ENCODE measurements at regions of chr5 and their contacts with region 1.

Region 1: DNA sequence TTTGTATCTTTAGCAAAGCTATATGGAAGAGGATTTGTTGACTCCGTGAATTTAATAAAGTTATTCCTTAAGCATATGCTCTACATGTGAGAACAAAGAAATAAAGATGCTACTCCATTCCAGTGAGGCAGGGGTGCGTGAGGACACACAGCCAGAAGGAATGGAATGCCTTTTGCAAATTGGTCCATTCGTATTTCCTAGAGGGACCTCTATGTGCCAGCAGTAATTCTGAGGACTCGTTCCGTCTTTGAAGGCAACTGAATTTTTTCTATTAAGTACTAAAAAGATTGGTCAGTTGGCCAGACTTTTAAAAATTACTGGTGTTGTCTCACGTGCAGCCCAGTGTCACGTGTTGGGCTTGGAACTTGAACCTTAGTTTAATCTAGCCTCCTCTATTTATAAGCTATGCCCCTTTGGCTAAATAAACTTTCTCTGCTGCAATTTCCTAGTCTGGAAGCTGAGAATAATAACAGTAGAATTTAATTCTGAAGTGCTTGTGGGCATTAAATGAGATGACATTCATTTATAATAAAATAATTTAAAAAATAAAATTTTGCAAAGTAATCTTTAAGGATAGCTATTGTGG is 13.9 kb downstream of the RAI14 start:
- DNase-seq: no peak
- H3K4me3 ChIP-seq: no peak overlapping the region
- CTCF ChIP-seq: no peak
- POLR2A ChIP-seq: no peak

Region 2: GRCh38 chr5:33479311-33479710 is 1190.7 kb before region 1 on chr5:
- intact Hi-C with region 1: loop called (anchors 5 kb)
- DNase-seq: no peak
- H3K4me3 ChIP-seq: no peak overlapping the region
- CTCF ChIP-seq: no peak
- POLR2A ChIP-seq: no peak

Region 3: GRCh38 chr5:34587355-34588241 is 82.4 kb before region 1 on chr5:
- intact Hi-C with region 1: no loop called
- DNase-seq: no peak
- H3K4me3 ChIP-seq: no peak overlapping the region
- CTCF ChIP-seq: peak in 1 of 3 donors; percentile 7
- POLR2A ChIP-seq: no peak

Region 4: GRCh38 chr5:34626036-34626754 is 43.8 kb before region 1 on chr5:
- intact Hi-C with region 1: no loop called
- DNase-seq: no peak
- H3K4me3 ChIP-seq: no peak overlapping the region
- CTCF ChIP-seq: no peak
- POLR2A ChIP-seq: no peak